ENCODE measurements at regions of chr12 and their contacts with region 1.

Region 1: DNA sequence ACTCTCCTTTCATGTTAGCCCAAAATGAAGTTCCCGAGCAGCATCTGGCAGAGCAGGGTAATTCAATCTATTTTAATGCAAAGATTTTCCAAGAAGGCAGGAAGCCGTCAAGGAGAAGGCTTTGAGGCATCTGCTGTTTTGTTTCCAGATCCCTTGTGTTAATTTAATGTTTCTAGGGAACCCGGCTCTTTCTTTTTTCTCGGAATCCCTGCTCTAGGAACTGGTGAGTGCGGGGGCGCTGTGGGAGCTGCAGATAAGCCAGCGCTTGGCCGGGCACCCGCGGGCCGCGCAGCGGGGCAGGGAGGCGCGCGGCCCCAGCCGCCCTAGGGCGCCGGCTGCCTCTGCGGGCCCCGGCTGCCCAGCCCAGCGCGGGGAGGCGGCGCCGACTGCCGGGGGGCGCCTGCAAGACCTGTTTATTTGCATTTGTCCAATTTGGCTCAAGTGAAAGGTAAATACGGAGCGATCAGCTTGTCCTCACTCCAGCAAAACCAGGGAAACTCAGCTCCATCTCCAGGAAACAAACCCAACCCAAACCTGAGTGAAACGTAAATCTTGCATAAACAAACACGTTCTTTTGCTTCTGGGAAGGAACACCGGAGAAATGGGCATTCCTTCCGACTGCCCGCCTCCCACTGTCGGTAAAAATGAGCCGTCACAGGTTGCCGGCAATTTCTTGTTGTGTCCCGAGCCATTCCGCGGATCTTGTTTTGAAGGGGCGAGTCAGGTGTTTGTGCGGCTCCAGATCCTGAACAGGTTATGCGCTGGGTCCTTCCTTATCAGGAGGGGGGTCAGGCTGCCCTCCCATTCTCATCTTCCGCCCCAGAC is 65.1 kb downstream of the CRADD start:
- DNase-seq: peak; percentile 67
- H3K27ac ChIP-seq: peak overlapping the region; percentile 81
- CTCF ChIP-seq: peak; percentile 68

Region 2: GRCh38 chr12:93569656-93570551 is 172.4 kb before region 1 on chr12:
- CTCF ChIA-PET with region 1: interaction called, 16 read pairs
- POLR2A ChIA-PET with region 1: interaction called, 3 read pairs
- DNase-seq: peak; percentile 91
- H3K27ac ChIP-seq: peak overlapping the region; percentile 88
- CTCF ChIP-seq: peak; percentile 80